ENCODE measurements at regions of chr19 and their contacts with region 1.

Region 1: DNA sequence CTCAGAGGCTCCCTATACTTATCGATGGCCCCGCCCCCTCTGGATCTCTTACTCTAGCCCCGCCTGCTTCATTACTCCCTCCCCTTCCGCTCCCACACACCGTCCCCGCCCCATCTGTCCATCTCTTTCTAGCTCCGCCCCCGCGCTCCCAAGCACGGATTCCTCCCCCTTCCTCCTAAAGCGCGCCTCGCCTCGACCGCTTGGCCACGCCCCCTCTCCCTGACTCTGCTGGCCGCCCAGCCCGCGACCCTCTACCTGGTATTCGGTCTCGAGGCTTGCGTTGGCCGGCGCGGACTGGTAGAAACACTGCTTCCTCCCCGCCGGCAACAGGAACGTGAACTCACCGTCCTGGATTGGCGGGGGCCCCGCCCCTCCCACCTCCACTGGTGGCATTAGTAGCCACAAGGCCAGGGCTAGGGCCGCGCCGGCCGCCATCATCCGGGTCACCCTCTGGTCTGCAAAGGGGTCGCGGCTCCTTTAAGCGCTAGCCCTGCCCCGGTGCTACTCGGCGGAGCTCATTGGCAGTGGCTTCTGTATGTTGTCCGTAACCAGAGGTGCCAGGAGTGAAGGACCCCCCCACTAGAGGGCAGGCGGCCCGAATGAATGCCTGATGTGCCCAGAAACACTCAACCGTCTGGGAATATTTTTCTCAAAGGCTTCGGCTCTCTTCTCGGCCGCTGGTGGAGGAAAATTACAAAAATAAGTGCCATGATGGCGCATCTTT is at the start of gene TMED1:
- DNase-seq: peak; percentile 91 to 98
- H3K4me3 ChIP-seq: peak within 1 kb of the TSS; percentile 71 to 86
- H3K27ac ChIP-seq: peak within 1 kb of the TSS; percentile 96 to 99
- H3K4me1 ChIP-seq: peaks cover 0 to 7% of the 10 kb centered on the region in 2 donors
- H3K27me3 ChIP-seq: no peaks in the 10 kb centered on the region
- CTCF ChIP-seq: peak in 2 of 3 experiments; percentile 41 to 46
- total RNA-seq, gene TMED1: 25.0 TPM

Region 2: DNA sequence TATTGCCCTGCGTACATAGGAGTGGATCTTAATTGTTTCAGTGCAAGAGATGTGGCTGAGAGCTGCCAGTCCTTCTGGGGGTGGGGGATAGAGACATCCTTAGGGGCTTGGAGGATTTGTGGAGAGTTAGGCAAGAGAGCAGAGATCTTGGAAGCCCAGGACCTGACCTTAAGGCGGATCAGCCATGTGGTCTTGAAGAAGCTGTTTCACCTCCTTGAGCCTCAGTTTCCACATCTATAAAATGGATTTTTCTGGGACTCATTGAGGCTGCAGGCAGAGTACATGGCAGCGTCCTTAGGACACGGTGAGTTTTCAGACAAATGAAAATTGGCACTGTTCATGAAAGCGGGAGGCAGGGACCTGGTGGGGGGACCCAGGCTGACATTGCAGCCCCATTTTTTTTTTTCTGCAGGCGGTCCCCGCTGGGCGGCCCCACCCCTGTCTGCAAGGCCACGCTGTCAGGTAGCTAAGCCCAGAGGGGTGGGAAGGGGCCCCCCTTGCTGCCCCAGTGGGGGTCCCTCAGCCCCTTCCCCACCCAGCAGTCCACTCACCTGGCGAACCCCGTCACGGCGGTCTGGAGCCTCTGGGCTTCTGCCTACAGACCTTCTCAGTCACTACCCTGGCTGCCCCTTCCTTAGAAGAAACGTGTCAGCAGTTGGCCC is 385.6 kb before region 1 on chr19:
- intact Hi-C with region 1: no loop called
- DNase-seq: no peak
- H3K4me3 ChIP-seq: no peak overlapping the region
- H3K27ac ChIP-seq: no peak overlapping the region
- H3K4me1 ChIP-seq: no peaks in the 10 kb centered on the region
- H3K27me3 ChIP-seq: no peaks in the 10 kb centered on the region
- CTCF ChIP-seq: no peak

Region 3: GRCh38 chr19:10817291-10818038 is 18.5 kb before region 1 on chr19:
- intact Hi-C with region 1: loop called (anchors 1 kb)
- DNase-seq: peak; percentile 42 to 89
- H3K4me3 ChIP-seq: peak overlapping the region; percentile 35 to 65
- H3K27ac ChIP-seq: peak overlapping the region; percentile 88 to 92
- H3K4me1 ChIP-seq: peaks cover 10 to 12% of the 10 kb centered on the region in 2 donors
- H3K27me3 ChIP-seq: no peaks in the 10 kb centered on the region
- CTCF ChIP-seq: no peak

Region 4: GRCh38 chr19:10864538-10864899 is 28.6 kb after region 1 on chr19:
- intact Hi-C with region 1: loop called (anchors 1 kb)
- DNase-seq: peak in 1 of 2 donors; percentile 89
- H3K4me3 ChIP-seq: peak overlapping the region; percentile 16 to 33
- H3K27ac ChIP-seq: peak overlapping the region in 1 of 2 donors; percentile 69
- H3K4me1 ChIP-seq: peaks cover 4 to 8% of the 10 kb centered on the region in 2 donors
- H3K27me3 ChIP-seq: no peaks in the 10 kb centered on the region
- CTCF ChIP-seq: peak; percentile 82 to 92 (median 89)

Region 5: GRCh38 chr19:10896580-10897526 is 60.9 kb after region 1 on chr19:
- intact Hi-C with region 1: no loop called
- DNase-seq: no peak
- H3K4me3 ChIP-seq: no peak overlapping the region
- H3K27ac ChIP-seq: no peak overlapping the region
- H3K4me1 ChIP-seq: peaks cover 0 to 13% of the 10 kb centered on the region in 2 donors
- H3K27me3 ChIP-seq: no peaks in the 10 kb centered on the region
- CTCF ChIP-seq: no peak